Left colon (tissue), 2 donors: ENCODE measurements at regions of chr17 and their contacts with region 1.

Region 1: GRCh38 chr17:43694077-43694870 is 32.6 kb upstream of the MEOX1 start:
- DNase-seq: peak; percentile 68 to 79
- ATAC-seq: peak; percentile 98

Region 2: DNA sequence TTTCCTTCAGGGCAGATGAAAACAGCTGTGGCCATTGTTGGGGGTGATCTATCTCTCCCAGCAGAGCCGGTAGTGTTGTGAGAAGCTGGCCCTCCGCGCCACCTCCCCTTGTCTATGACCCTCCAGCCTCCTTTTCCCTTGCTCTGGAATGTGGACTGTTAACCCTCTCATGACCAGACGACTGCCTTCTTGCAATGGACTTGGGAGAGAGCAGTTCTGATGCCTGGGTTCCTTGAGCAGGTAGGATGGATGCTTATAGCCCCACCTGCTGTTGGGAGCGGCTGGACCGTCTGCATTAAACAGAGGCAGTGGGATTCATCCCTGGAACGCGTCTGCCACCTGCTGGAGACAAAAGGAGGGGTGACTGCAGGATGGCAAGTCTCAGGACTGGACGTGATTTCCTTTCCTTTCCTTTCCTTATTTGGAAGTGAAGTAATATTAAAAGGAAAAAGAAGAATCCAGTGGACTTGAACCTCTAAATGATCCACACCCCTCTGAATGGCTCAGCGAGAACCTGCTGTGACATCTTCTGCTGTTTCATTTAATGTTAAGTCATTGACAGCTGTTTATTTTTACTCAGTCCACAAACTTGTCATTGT is 66.1 kb after region 1 on chr17:
- intact Hi-C with region 1: loop called (anchors 1 to 5 kb)
- DNase-seq: peak; percentile 88 to 97
- ATAC-seq: peak; percentile 97

Region 3: DNA sequence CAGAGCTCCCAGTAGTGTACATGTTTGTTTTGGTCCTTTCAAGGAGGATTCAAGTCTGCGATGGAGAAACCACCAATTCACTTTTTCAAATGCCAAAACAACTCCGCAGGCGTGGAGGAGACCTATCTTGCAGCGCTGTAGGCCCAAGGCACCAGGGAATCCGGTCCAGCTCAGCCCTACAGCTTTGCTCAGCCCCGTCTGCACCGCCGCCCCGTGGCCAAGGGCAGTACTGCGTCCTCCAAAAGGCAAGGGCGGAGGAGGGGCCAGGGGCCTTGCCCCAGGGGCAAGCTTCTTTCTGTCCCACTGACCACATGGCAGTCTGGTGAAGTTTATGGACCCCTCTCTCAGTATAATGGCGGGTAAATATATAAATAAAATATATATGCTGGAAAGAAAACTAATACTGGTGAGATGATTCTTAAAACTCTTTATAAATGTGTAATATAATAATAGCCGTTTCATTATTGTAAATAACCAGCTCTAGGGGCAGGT is 152.0 kb after region 1 on chr17:
- intact Hi-C with region 1: loop called in 1 of 2 experiments (anchors 10 kb)
- DNase-seq: peak; percentile 68 to 86
- ATAC-seq: peak; percentile 99